ENCODE measurements at regions of chr1 and their contacts with region 1.

Region 1: DNA sequence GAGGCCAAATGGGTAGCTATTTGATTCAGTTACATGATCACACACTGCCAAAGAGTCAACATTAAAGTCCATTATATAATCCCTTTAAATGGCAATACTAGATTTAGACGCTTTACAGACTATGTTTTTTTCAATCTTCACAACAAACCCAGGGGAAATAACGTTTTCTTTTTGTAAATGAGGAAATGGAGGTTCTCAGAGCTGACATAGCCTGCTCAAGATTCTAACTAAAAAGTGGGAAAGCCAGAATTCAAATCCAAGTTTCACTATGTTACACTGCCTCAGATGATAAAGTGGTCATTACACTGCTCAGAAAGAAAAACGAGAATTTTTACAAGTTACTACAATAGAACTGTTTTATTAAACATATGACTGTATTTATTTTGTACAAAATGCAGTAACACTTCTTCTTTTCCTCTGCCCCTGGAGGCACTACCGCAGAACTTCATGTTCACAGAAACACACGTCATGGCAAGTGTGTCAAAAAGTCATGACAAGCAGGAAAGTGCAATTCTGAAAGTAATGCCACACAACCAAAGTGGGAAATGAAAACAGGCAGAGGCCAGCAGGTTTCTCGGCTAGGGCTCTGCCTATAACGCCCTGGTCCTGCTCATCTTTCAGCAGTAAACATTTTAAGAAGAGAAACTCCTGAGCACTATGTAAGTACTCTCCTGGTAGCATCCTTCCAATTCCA is 19.0 kb downstream of the THEMIS2 start:
- DNase-seq: peak; percentile 48 to 74
- ATAC-seq: peak; percentile 71 to 85 (median 79)
- H3K4me3 ChIP-seq: no peak overlapping the region
- H3K4me3 Mint-ChIP-seq: peak overlapping the region; percentile 62
- H3K27ac ChIP-seq: peak overlapping the region; percentile 90
- H3K27ac Mint-ChIP-seq: peak overlapping the region; percentile 94 to 99
- H3K4me1 ChIP-seq: peaks cover 56% of the 10 kb centered on the region
- H3K4me1 Mint-ChIP-seq: peaks cover 45 to 48% of the 10 kb centered on the region in 2 donors
- H3K27me3 ChIP-seq: no peaks in the 10 kb centered on the region
- H3K27me3 Mint-ChIP-seq: no peaks in the 10 kb centered on the region
- CTCF ChIP-seq: peak; percentile 50

Region 2: DNA sequence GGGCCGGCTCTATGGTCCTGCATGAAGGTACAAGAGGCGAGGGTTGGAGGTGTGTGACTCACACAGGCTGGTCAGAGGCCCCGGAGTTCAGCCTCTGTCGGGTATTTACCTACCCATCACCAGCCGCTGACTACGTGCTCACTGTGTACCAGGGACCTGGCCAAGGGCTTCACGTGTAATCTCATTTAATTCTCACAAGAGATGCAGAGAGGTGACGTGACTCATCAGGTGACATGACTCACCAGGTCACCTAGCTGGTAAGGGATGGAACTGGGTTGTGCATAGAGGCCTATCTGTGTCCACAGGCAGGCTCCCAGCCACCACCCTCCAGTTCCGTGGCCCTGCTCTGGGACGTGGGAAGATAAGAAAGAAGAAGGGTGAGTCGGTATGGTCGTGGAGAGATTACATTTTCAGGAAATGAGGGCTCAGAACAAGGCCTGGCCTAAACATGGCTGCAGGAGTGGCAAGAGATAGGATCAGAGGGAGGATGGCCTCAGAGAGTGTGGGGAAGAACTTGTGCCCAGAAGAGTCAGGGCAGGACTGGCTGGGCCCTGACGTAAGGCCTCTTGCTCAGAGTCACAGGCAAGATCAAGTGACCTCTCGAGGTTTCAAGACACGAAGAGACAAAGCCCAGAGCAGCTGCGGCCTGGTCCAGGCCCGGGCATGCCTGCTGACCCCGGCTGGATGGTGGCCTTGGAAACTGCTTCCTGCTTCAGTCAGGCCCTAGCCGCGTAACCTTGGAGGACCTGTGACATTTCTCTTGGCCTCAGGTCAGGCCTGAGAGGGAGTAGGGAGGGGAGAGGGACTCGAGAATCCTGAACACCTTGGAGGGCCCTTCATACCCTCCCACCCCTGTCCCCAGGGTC is 348.7 kb before region 1 on chr1:
- intact Hi-C with region 1: no loop called
- DNase-seq: no peak
- ATAC-seq: peak in 1 of 3 donors; percentile 12
- H3K4me3 ChIP-seq: no peak overlapping the region
- H3K4me3 Mint-ChIP-seq: no peak overlapping the region
- H3K27ac ChIP-seq: no peak overlapping the region
- H3K27ac Mint-ChIP-seq: peak overlapping the region; percentile 23 to 27
- H3K4me1 ChIP-seq: no peaks in the 10 kb centered on the region
- H3K4me1 Mint-ChIP-seq: peaks cover 13 to 34% of the 10 kb centered on the region in 2 donors
- H3K27me3 ChIP-seq: no peaks in the 10 kb centered on the region
- H3K27me3 Mint-ChIP-seq: no peaks in the 10 kb centered on the region
- CTCF ChIP-seq: no peak

Region 3: DNA sequence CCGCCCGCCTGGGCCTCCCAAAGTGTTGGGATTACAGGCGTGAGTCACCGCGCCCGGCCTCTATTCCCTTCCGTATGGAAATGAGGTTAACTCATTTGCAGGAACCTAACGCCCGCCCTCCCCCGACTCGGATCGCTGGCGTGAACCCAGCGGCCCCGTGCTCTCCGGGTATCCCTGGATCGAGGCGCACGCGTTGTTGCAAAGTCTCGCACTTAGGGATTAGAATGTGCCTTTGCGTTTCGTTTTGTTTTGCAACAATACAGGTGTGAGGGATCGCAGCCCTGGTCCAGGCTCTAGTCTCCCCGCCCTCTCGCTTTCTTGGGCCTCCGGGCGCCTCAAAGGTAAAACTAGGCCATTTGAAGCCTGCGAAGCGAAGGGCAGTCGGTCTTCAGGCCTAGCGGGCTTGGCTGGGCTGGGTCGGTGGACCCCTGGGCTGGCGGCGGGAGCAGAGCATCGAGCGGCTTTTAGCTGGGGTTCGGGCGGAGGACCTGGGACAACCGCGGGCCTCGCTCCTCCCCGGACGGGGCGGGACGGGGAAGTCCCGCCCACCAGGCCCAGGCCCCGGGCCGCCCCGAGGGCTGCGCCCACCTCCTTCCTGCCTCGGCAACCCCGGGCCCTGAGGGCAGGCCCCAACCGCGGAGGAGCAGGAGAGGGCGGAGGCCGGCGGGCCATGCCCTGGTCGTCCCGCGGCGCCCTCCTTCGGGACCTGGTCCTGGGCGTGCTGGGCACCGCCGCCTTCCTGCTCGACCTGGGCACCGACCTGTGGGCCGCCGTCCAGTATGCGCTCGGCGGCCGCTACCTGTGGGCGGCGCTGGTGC is 68.3 kb after region 1 on chr1 and contains the start of gene XKR8:
- intact Hi-C with region 1: loop called (anchors 5 kb)
- DNase-seq: peak; percentile 81 to 92
- ATAC-seq: peak; percentile 98 to 99 (median 98)
- H3K4me3 ChIP-seq: peak within 1 kb of the TSS; percentile 83
- H3K4me3 Mint-ChIP-seq: peak within 1 kb of the TSS; percentile 86
- H3K27ac ChIP-seq: peak within 1 kb of the TSS; percentile 76
- H3K27ac Mint-ChIP-seq: peak within 1 kb of the TSS; percentile 77 to 80
- H3K4me1 ChIP-seq: peaks cover 30% of the 10 kb centered on the region
- H3K4me1 Mint-ChIP-seq: peaks cover 12 to 28% of the 10 kb centered on the region in 2 donors
- H3K27me3 ChIP-seq: no peaks in the 10 kb centered on the region
- H3K27me3 Mint-ChIP-seq: no peaks in the 10 kb centered on the region
- CTCF ChIP-seq: peak; percentile 52
- total RNA-seq, gene XKR8: 8.0 to 16.8 (median 15.5) TPM

Measured in natural killer cell (primary cell).